ENCODE measurements at regions of chr5 and their contacts with region 1.

Region 1: DNA sequence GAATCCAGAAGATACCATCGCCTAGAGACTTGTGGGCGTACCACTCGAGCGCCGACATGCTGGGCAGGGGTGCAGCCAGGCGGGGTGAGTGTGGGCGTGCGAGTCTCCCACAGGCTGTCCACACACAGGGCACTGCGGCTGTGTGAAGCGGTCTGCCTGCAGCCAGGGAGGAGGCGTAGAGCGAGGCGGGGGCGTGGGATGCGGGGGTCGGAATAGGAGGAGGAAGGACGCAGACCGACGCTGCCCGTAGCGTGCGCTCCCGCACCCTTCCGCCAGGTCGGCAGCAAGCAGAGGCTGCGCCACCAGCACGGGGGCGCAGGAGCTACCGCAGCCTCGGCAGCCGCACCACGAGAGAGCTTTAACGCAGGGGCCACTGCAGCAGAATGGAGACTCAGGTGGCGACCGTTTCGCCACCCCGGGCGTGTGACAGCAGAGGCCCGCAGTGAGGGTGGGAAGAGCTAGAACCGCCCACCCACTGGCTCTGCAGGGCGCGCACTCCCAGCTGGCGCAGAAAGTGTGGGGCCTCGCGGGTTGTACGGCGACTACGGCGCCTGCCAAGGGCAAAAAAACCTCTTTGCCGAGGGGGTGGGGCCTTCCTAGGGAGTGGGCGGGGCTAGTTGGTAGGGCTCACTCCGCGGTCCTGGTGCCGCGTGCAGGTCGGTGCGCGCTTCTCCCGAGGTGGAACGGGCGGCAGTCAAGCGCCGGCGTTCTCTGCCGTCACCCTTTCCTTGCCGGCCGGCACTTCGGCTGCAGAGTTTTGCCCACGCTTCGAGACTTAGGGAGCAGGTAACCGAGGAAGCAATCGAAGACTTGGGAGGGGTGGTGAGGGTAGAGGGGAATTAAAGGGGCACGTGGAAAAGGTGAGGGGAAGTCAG is at the starts of genes MBLAC2 and POLR3G:
- DNase-seq: peak; percentile 92 to 96 (median 94)
- ATAC-seq: peak; percentile 86
- H3K4me3 ChIP-seq: peak within 1 kb of the TSS; percentile 65
- H3K27ac ChIP-seq: peak within 1 kb of the TSS; percentile 92
- H3K4me1 ChIP-seq: peaks cover 16 to 25% of the 10 kb centered on the region in 2 experiments; a peak in 4 of 5 replicates
- H3K27me3 ChIP-seq: no peaks in the 10 kb centered on the region
- CTCF ChIP-seq: peak; percentile 36 to 84 (median 52)
- EP300 ChIP-seq: no peak; the same call in 1 of the 2 replicates
- POLR2A ChIP-seq: peak; percentile 95
- RAD21 ChIP-seq: no peak
- polyA plus RNA-seq, gene MBLAC2: 2.4 to 3.2 TPM
- polyA plus RNA-seq, gene POLR3G: 95.1 to 111 TPM

Region 2: DNA sequence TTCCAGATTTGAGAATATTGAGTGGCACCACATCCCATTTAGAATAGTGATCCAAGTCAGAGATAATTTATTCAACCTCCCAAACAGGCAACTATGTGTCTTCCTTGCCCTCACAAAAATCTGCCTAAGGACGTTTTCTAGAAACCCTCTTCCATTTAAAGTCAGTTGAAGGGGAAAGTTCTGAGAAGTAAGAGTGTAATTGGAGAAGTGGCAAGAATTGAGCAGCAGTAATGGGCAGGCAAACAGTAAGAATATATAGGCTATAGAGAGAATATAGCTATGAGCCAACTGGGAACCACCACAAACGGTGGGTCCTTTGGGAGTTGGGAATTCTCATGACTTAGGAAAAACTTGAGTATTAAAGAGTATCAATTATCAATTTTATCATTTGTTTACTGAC is 33.8 kb before region 1 on chr5:
- CTCF ChIA-PET with region 1: no interaction called
- POLR2A ChIA-PET with region 1: interaction called, 4 read pairs
- in situ Hi-C with region 1: no loop called
- intact Hi-C with region 1: loop called (anchors 2 kb)
- DNase-seq: no peak
- ATAC-seq: peak; percentile 43
- H3K4me3 ChIP-seq: no peak overlapping the region
- H3K27ac ChIP-seq: peak overlapping the region; percentile 58; the same call in 1 of the 3 replicates
- H3K4me1 ChIP-seq: peaks cover 0 to 7% of the 10 kb centered on the region in 2 experiments; a peak in 2 of 5 replicates
- H3K27me3 ChIP-seq: no peaks in the 10 kb centered on the region
- CTCF ChIP-seq: no peak
- EP300 ChIP-seq: no peak
- POLR2A ChIP-seq: no peak
- RAD21 ChIP-seq: no peak

Region 3: DNA sequence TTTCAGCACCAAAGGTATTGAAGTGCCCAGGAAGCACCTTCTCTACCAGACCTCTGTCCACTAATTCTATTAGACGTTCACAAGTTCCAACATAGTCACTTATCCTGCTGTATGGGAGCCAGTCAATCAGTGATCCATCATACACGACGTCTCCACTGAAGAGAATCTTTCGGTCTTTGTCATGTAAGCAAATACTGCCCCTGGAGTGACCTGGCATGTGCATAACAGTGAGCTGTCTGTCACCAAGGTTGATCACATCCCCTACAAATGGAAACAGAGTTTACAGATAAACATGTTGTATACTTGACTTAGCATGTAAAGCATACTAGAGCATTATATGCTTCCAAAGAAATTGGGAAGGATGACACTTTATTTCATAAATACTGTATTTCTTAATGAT is 13.2 kb before region 1 on chr5:
- CTCF ChIA-PET with region 1: no interaction called
- POLR2A ChIA-PET with region 1: interaction called, 18 read pairs
- in situ Hi-C with region 1: no loop called
- intact Hi-C with region 1: no loop called
- DNase-seq: no peak
- ATAC-seq: peak; percentile 54; the same call in 2 of the 3 replicates
- H3K4me3 ChIP-seq: no peak overlapping the region
- H3K27ac ChIP-seq: no peak overlapping the region
- H3K4me1 ChIP-seq: no peaks in the 10 kb centered on the region
- H3K27me3 ChIP-seq: no peaks in the 10 kb centered on the region
- CTCF ChIP-seq: no peak
- EP300 ChIP-seq: no peak
- POLR2A ChIP-seq: no peak
- RAD21 ChIP-seq: no peak

Measured in K562 (cell line).